Activated T-helper 2 cell treated with anti-CD3 and anti-CD28 coated beads, Interferon-gamma antibody, Interleukin-2, Interleukin-4, amounts not matched to agents 10 μg/mL and 5 μg/mL and 100 μg/mL, durations not matched to agents 14 hours and 24 hours and 36 hours (primary cell): ENCODE measurements at regions of chr6 and their contacts with region 1.

Region 1: GRCh38 chr6:22062807-22063408 is 233.9 kb downstream of the PRL start:
- DNase-seq: peak; percentile 68
- H3K4me3 Mint-ChIP-seq: peak overlapping the region; percentile 67
- H3K27ac Mint-ChIP-seq: peak overlapping the region; percentile 97
- H3K4me1 Mint-ChIP-seq: peaks cover 69% of the 10 kb centered on the region
- H3K27me3 Mint-ChIP-seq: no peaks in the 10 kb centered on the region

Region 2: GRCh38 chr6:20202324-20202658 is 1860.6 kb before region 1 on chr6:
- intact Hi-C with region 1: loop called (anchors 10 kb)
- DNase-seq: no peak
- H3K4me3 Mint-ChIP-seq: no peak overlapping the region
- H3K27ac Mint-ChIP-seq: peak overlapping the region; percentile 96
- H3K4me1 Mint-ChIP-seq: peaks cover 73% of the 10 kb centered on the region
- H3K27me3 Mint-ChIP-seq: no peaks in the 10 kb centered on the region

Region 3: DNA sequence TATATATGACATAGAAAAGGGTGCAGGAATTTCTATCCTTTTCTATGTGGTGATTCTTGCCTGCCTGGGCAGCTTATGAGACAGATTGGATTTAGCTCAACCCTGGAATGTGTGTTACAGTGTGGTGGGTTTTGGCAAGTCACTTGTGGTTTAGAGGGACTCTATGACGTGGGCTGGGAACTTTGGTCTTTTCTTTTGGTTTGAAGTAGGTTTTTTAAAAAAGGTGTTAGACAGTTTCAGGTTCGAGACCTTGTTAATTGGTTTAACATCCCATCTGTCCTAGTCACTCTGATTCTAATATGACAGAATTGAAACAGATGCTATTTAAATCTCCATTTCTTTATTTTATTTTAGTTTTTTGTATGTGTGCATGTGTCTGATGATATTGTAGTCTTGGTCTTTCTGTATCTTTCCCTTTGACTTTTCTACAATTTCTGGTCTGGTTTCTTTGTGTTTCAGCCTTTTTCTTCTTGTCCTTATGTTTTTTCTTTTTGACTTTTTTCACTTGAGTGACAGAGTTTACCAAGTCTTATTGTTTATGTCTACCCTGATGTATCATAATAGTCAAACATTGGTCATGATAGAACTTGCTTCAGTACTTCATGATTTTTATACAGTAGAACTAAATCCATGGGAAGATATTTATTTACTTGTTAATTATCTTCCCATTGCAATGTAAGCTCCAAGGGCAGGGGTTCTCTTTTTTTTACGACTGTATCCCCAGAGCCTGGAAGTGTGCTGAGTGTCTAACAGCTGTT is 1354.4 kb before region 1 on chr6:
- intact Hi-C with region 1: loop called (anchors 10 kb)
- DNase-seq: no peak
- H3K4me3 Mint-ChIP-seq: no peak overlapping the region
- H3K27ac Mint-ChIP-seq: peak overlapping the region; percentile 38
- H3K4me1 Mint-ChIP-seq: peaks cover 62% of the 10 kb centered on the region
- H3K27me3 Mint-ChIP-seq: no peaks in the 10 kb centered on the region

Region 4: DNA sequence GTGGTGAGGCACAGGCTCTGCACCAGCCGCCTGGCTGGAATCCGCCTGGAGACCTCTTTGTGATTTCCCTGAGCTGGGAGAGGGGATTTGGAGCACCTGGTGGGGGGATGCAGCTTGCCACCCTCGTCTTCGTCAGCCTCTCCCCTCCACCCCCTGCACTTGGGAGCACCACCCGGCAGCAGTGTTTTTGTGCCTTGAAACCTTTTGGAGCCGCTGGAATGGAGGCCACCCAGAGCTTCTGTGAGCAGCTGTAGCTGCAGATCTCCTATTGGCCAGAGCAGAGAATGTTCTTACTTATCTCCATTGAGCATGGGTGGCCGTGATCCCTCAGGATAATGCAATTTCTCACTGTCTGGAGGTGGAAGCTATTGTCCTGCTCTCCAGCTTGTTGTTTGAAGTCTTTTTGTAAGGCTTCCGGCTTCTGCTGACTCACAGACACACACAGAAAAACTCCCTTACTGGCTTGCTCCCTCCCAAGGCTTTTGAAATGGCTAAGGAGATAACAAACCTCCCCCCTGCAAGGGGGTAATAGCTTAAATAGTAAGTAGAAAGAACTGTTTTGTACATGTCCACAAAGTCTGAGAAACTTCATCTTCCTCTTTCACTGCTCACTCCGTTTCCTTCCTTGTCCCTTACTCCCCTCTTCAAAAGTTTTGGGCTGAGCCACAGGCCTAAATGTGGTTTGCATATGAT is 37.3 kb before region 1 on chr6:
- intact Hi-C with region 1: loop called (anchors 1 kb)
- DNase-seq: peak; percentile 13
- H3K4me3 Mint-ChIP-seq: peak overlapping the region; percentile 43
- H3K27ac Mint-ChIP-seq: peak overlapping the region; percentile 78
- H3K4me1 Mint-ChIP-seq: peaks cover 39% of the 10 kb centered on the region
- H3K27me3 Mint-ChIP-seq: no peaks in the 10 kb centered on the region

Region 5: DNA sequence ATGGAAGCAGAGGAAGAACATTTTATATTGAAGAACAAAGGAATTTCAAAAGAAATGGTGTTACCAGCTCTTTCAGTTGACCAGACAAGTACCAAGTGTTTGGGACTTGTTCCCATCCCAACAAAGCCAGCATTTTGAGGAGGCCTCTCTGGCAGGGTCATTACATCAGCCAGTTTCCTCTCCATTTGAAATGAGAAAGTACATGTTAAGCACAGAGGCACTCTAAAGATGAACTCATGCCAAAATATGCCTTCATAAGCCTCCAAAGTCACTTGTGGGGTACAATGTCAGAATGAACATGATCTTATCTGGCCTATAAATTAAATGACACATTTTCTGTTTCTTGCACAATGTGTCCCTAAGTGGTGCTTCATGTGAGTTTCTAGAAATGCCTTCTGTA is 10.0 kb after region 1 on chr6:
- intact Hi-C with region 1: no loop called
- DNase-seq: no peak
- H3K4me3 Mint-ChIP-seq: no peak overlapping the region
- H3K27ac Mint-ChIP-seq: no peak overlapping the region
- H3K4me1 Mint-ChIP-seq: peaks cover 37% of the 10 kb centered on the region
- H3K27me3 Mint-ChIP-seq: no peaks in the 10 kb centered on the region

Region 6: GRCh38 chr6:22102671-22103070 is 39.8 kb after region 1 on chr6:
- intact Hi-C with region 1: loop called (anchors 1 kb)
- DNase-seq: no peak
- H3K4me3 Mint-ChIP-seq: no peak overlapping the region
- H3K27ac Mint-ChIP-seq: peak overlapping the region; percentile 85
- H3K4me1 Mint-ChIP-seq: peaks cover 19% of the 10 kb centered on the region
- H3K27me3 Mint-ChIP-seq: no peaks in the 10 kb centered on the region

Region 7: DNA sequence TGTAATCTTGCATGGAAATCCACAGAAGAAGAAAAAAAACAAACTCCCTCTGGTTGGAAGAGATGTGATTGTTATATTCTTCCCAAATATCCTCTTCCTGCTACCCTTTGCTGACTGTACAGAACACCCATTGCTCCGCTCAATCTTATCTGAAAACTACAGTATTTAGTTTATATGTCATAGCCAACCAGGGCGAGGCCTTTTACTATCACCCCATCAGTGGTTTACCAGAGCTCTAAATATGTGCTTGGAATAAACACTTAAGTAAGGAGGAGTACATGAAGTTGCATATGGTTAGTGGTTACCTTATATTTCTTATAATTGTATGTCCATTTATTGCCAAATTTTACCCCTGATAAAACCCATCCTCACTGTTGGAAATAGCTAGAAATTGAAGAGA is 221.8 kb after region 1 on chr6:
- intact Hi-C with region 1: no loop called
- DNase-seq: no peak
- H3K4me3 Mint-ChIP-seq: no peak overlapping the region
- H3K27ac Mint-ChIP-seq: no peak overlapping the region
- H3K4me1 Mint-ChIP-seq: no peaks in the 10 kb centered on the region
- H3K27me3 Mint-ChIP-seq: no peaks in the 10 kb centered on the region